Cardiac septum (tissue), 1 donor: ENCODE measurements at regions of chr16 and their contacts with region 1.

Region 1: DNA sequence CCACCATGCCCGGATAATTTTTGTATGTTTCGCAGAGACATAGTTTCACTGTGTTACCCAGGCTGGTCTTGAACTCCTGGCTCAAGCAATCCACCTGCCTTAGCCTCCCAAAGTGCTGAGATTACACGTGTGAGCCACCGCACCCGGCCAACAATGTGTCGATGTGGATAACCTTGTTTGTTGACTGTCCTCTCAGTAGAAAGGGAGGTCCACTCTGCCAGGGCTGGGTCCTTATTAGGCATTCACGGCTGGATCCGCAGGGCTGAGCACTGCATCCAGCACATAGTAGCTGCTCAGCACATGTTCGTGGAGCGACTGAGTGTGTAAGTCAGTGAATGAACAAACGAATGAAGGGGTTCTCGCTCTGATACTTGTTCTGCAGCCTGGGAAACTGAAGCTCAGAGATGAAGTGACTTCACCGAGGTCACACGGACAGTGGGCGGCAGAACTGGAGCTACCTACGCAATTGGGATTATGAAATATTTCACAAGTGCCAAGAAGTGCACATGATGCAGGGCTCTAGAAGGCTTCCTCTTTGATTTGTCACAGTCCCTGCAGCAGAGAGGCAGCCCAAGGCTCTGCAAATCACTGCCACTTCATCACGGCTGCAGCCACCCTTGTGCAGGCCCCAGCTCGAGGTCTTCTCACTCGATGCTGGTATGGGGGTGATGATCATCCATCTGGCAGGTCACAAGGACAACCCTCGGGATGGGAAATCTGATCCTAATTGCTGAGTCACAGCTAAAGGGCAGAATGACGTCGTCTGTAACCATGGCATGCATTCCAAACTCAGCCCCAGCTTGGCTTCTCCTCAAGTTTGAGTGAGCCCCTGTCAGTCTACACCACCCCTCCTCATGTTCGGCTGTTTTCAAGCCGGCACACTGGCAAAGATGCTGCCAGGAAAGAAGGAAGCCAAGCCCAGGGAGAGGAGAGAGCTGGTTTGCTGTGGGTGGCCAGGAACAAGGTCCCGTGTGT is 28.0 kb upstream of the SNN start:
- DNase-seq: peak; percentile 89

Region 2: GRCh38 chr16:11370084-11370931 is 269.9 kb before region 1 on chr16:
- intact Hi-C with region 1: no loop called
- DNase-seq: no peak

Region 3: GRCh38 chr16:11407047-11407982 is 232.9 kb before region 1 on chr16:
- intact Hi-C with region 1: loop called (anchors 5 kb)
- DNase-seq: no peak

Region 4: DNA sequence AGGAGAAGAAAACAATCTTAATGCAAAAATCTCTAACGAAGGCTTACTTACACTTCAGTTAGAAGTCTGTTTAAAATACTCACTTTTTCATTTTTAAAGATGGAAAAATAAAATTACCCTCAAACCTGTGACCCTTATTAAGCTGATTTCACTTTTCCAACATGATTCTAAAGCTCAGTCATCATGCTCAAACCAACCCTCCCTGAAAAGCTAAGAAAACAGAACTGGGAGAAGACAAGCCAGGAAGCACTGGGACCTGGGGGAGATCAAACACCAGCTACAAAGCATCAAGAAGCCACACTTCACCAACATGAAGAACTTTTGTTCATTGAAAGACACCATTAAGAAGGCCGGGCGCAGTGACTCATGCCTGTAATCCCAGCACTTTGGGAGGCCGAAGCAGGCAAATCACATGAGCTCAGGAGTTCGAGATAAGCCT is 142.3 kb before region 1 on chr16:
- intact Hi-C with region 1: no loop called
- DNase-seq: no peak

Region 5: GRCh38 chr16:11534262-11534661 is 106.0 kb before region 1 on chr16:
- intact Hi-C with region 1: loop called (anchors 5 kb)
- DNase-seq: no peak

Region 6: GRCh38 chr16:11586856-11587642 is 53.2 kb before region 1 on chr16 and contains the start of gene LITAF:
- intact Hi-C with region 1: loop called (anchors 5 kb)
- DNase-seq: peak; percentile 84
- total RNA-seq, gene LITAF: 40.5 TPM

Region 7: GRCh38 chr16:11715246-11715947 is 75.2 kb after region 1 on chr16:
- intact Hi-C with region 1: no loop called
- DNase-seq: no peak